ENCODE measurements at regions of chr19 and their contacts with region 1.

Region 1: GRCh38 chr19:47790398-47790814 is 11.9 kb downstream of the SELENOW start:
- H3K4me3 Mint-ChIP-seq: no peak overlapping the region
- H3K27ac Mint-ChIP-seq: no peak overlapping the region
- H3K4me1 Mint-ChIP-seq: no peaks in the 10 kb centered on the region
- H3K27me3 Mint-ChIP-seq: peaks cover 4% of the 10 kb centered on the region

Region 2: GRCh38 chr19:47765523-47766358 is 24.7 kb before region 1 on chr19:
- intact Hi-C with region 1: loop called (anchors 1 kb)
- H3K4me3 Mint-ChIP-seq: no peak overlapping the region
- H3K27ac Mint-ChIP-seq: no peak overlapping the region
- H3K4me1 Mint-ChIP-seq: no peaks in the 10 kb centered on the region
- H3K27me3 Mint-ChIP-seq: peaks cover 1% of the 10 kb centered on the region

Measured in dendritic cell treated with granulocyte-macrophage colony-stimulating factor and Interleukin-4, amounts not matched to agents 40 ng/mL and 50 ng/mL, for 4 days (primary cell).